ENCODE measurements at regions of chr3 and their contacts with region 1.

Region 1: DNA sequence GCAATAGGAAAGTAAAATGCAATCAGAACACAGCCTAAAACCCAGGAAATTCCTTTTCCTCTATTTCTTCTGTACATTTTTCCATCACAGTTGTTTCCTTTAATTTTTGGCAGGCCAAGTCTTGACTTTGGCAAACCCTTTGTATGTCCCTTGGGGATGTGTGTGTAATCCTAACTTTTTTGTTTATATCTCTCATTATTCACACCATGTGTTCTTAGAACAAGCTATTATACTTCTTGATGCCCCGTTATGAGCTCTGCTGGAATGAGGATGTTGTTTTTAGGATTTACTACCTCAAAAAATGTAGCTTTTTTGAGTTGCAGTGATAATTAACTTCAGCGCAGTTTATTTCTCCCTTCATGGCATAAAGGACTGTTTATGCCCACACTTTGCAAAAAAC is 123.4 kb downstream of the ABI3BP start:
- DNase-seq: peak; percentile 29
- ATAC-seq: peak; percentile 27; the same call in 1 of the 2 replicates
- H3K4me3 ChIP-seq: no peak overlapping the region
- H3K27ac ChIP-seq: no peak overlapping the region
- H3K4me1 ChIP-seq: no peaks in the 10 kb centered on the region
- H3K27me3 ChIP-seq: peaks cover 2% of the 10 kb centered on the region; the same call in 1 of the 2 replicates
- CTCF ChIP-seq: no peak
- POLR2A ChIP-seq: no peak
- RAD21 ChIP-seq: no peak

Region 2: GRCh38 chr3:100613721-100614390 is 255.9 kb before region 1 on chr3:
- CTCF ChIA-PET with region 1: no interaction called
- POLR2A ChIA-PET with region 1: no interaction called
- dilution Hi-C with region 1: no loop called
- in situ Hi-C with region 1: no loop called
- intact Hi-C with region 1: loop called (anchors 10 kb)
- DNase-seq: no peak
- ATAC-seq: no peak
- H3K4me3 ChIP-seq: no peak overlapping the region
- H3K27ac ChIP-seq: no peak overlapping the region
- H3K4me1 ChIP-seq: no peaks in the 10 kb centered on the region
- H3K27me3 ChIP-seq: peaks cover 16% of the 10 kb centered on the region
- CTCF ChIP-seq: no peak
- POLR2A ChIP-seq: no peak
- RAD21 ChIP-seq: no peak

Region 3: DNA sequence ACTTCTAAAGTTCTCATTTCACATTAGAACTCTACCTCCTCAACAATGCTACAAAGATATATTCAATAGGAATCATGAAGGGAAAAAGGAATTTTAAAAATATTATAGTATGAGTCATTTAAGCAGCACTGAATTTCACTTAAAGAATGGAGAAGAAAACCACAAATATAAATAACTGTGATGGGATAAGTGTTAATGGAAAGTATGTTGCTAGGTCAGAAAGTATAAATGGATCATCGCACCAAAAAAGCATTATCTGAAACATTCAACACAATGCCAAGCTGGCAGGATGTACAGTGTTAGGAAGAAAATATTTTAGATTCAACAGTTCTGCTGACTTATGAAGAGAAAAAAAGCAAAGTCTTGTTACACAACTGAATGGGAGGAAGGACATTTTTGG is 59.1 kb before region 1 on chr3:
- CTCF ChIA-PET with region 1: no interaction called
- POLR2A ChIA-PET with region 1: no interaction called
- dilution Hi-C with region 1: no loop called
- in situ Hi-C with region 1: no loop called
- intact Hi-C with region 1: loop called (anchors 5 kb)
- DNase-seq: peak; percentile 89
- ATAC-seq: peak; percentile 95
- H3K4me3 ChIP-seq: no peak overlapping the region
- H3K27ac ChIP-seq: no peak overlapping the region
- H3K4me1 ChIP-seq: peaks cover 7% of the 10 kb centered on the region
- H3K27me3 ChIP-seq: peaks cover 1% of the 10 kb centered on the region; the same call in 1 of the 2 replicates
- CTCF ChIP-seq: no peak
- POLR2A ChIP-seq: no peak
- RAD21 ChIP-seq: no peak